Posterior vena cava (tissue), 2 donors: ENCODE measurements at regions of chr3 and their contacts with region 1.

Region 1: DNA sequence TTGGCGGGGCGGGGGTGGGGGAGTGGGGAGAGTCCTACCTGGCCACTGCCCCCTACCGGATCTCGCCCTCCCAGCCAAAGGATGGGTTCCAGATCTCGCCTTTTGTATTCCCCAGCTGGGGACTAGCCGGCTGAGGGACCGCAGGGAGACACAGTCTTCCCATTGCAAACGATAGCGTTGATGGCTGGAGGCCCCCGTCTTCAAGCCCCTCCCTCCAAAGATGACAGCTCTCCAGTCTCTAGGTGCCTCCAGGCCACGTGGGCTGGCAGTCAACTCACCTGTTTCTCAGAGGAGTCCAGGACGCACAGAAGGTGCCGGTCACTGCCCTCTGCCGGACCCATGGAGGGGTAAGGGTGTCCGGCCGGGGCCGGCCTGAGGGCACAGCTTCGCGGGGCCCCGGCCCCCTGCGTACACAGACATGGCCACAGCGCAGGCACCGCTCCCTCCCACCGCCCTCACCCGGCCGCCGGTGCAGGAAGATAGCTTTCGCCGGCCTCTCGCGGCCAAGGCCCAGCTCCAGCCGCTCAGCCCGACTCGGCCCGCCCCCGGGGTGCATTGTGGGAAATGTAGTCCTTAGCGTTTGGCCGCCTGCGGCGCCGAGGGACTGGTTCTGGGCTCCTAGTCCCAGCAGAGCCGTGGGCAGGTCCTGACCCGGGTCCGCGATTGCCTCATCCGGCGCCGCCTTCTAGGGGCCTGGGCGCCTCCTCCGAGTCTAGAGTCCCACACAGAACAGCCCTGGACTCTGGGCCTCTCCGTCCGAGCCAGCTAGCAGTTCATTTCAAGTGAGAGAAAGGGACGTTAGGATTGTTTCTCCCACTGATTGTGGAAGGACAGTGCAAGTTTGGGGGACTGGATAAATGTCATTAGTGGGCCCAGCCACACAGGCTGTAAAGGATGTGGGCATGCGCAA is at the start of gene MON1A:
- DNase-seq: peak; percentile 99
- total RNA-seq, gene MON1A: 7.6 to 9.3 TPM

Region 2: GRCh38 chr3:51282931-51283330 is 1353.3 kb after region 1 on chr3:
- intact Hi-C with region 1: loop called in 1 of 2 experiments (anchors 10 kb)
- DNase-seq: no peak